Posterior cingulate gyrus (tissue), 11 donors: ENCODE measurements at regions of chr19 and their contacts with region 1.

Region 1: DNA sequence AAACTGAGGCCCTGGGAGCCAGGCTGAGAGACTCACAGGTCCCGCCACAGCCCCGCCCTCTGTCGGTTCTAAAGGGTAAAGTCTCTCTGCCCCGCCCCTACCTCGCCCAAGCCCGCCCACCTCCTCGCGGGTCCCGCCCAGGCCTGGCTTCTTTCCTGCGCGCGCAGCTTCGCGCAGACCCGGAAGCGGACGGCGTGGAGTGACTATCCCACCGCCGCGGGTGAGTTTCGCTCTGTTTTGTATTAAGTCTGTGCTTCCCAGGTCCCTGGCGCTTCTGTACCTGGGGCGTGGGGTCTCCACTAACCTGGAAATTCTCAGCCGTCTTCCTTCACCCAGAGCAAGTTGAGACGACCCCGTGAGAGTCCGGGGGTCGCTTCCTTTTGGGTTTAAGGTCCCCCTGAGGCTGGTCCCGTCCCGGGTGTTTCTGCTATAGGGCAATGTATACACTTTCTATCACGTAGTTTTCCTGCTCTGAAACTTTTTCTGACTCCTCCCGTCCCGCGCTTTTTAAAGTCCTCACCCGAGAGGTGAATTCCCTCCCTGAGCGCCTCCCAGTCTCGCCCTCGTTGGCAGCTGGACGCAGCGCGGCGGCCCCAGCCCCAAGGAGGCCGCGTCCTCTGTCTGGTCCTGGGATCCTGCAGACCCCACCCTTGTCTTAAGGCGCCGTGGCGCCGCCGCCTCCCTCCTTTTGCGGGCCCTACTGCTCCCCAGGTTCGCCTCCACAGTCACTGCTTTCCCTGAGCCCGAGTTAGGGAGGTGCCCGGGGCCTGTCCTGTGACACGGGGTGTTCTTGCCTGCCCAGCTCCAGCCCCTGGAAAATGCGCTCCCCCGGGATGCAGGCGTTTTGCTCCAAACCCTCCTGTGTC is at the start of gene ZNF765:
- DNase-seq: peak; percentile 85 to 98 (median 91)

Region 2: GRCh38 chr19:53333463-53334449 is 61.5 kb before region 1 on chr19 and contains the start of gene ZNF845:
- intact Hi-C with region 1: loop called (anchors 10 kb)
- DNase-seq: peak; percentile 79 to 99 (median 93)

Region 3: DNA sequence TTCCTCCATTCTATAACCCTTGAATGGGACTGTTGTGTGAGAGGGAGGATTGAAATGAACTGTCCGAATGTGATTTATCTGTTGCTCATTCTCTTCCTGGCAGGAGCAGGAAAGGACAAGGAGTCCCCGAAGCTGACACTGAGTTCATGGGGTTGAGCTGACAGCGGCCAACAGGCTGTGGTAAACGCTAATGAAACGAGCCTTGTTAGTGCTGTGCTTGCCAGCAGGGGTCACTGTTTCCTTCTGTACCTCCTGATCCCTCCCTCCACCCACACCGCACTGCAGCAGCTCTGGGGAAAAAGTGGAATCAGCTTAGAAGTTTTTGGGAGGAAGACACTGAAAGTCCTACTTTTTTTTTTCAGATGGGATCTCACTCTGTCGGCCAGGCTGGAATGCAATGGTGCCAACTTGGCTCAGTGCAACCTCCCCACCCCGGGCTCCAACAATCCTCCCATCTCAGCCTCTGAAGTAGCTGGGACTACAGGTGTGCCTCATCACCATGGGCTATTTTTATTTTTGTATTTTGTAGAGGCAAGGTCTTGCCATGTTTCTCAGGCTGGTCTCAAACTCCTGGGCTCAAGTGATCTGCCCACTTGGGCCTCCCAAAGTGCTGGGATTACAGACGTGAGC is 29.9 kb after region 1 on chr19:
- intact Hi-C with region 1: loop called (anchors 2 kb)
- DNase-seq: peak; percentile 45 to 95 (median 76)

Region 4: DNA sequence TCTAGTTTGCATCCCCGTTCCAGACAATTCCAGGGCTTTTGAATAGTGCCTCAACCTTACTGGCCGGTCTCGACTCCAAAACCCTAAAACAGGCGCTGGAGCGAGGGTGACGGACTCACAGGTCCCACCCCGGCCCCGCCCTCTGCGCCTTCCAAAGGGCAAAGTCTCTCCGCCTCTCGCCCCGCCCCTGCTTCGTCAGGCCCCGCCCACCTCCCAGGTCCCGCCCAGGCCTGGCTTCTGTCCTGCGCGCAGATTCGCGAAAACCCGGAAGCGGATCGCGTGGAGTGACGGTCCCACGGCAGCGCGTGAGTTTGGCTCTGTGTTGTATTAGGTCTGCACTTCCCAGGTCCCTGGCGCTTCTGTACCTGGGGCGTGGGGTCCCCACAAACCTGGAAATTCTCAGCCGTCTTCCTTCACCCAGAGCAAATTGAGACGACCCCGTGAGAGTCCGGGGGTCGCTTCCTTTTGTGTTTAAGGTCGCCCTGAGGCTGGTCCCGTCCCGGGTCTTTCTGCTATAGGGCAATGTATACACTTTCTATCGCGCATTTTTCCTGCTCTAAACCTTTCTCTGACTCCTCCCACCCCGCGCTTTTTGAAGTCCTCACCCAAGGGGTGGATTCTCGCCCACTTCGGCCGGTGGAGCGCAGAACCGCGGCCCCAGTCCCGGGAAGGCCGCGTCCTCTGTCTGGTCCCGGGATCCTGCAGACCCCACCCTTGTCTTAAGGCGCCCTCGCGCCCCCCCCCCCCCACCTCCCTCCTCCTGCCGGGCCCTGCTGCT is 72.5 kb after region 1 on chr19 and contains the start of gene ZNF813:
- intact Hi-C with region 1: loop called (anchors 2 kb)
- DNase-seq: peak; percentile 80 to 99 (median 94)

Region 5: DNA sequence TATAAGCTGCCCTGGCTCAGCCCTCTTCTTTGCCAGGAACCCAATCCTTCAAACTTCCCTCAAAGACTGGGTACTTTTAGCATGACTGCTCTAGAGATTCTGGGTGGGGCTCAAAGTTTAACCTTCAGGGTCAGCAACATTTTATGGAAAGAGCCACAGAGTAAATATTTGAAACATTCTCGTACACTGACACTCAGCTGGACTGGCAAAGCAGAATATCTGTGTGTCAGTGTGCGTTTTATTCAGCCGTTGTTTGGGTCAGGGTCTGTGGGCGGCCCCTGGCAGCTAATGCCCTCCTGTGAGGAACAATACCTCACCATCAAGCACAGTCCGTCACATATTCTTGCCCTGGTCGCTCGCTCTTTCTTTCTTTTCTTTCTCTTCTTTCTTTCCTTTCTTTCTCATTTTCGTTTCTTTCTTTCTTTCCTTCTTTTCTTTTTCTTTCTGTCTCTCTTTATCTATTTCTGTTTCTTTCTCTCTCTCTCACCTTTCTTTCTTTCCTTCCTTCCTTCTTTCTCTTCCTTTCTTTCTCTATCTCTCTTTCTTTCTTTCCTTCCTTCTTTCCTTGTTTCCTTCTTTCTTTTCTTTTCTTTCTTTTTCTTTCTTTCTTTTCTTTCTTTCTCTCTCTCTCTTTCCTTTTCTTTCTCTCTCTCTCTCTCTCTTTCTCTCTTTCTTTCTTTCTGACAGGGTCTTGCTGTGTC is 247.3 kb after region 1 on chr19:
- intact Hi-C with region 1: no loop called
- DNase-seq: no peak